Right cardiac atrium (tissue), 5 donors: ENCODE measurements at regions of chr18 and their contacts with region 1.

Region 1: GRCh38 chr18:57959278-57959677 is 84.7 kb upstream of the NEDD4L start:
- DNase-seq: peak in 1 of 3 donors; percentile 44
- ATAC-seq: peak; percentile 48 to 62
- H3K4me3 ChIP-seq: no peak overlapping the region
- H3K27ac ChIP-seq: no peak overlapping the region
- H3K4me1 ChIP-seq: no peaks in the 10 kb centered on the region
- H3K27me3 ChIP-seq: no peaks in the 10 kb centered on the region

Region 2: DNA sequence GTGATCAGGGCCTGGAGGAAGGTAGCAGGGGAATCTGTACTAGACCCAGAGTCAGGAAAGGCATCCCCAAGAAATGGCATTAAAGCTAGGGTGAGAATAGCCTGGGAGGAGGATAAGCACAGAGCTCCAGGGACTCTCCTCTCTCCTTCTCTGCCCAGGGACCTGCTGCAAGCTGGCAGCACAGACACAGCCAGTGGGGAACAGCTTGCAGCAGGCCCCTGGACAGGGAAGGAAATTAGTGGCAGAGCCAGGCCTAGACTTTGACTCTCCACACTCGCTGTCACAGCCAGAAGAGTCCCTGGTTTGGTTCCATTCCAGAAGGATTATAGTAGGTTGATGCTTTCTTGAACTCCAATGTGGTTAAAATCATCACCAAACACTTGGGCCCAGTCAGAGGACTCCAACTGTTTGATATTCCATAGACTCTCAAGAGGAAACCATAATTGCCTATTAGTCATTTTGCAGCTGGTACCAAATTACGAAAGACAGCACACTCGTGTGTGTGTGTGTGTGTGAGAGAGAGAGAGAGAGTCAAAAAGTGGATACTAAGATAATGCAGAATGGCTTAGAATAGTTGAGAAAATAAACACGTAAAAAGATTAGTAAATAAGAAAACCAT is 60.7 kb before region 1 on chr18:
- intact Hi-C with region 1: loop called in 1 of 4 experiments (anchors 10 kb)
- DNase-seq: no peak
- ATAC-seq: no peak
- H3K4me3 ChIP-seq: no peak overlapping the region
- H3K27ac ChIP-seq: no peak overlapping the region
- H3K4me1 ChIP-seq: no peaks in the 10 kb centered on the region
- H3K27me3 ChIP-seq: no peaks in the 10 kb centered on the region